ENCODE measurements at regions of chr10 and their contacts with region 1.

Region 1: DNA sequence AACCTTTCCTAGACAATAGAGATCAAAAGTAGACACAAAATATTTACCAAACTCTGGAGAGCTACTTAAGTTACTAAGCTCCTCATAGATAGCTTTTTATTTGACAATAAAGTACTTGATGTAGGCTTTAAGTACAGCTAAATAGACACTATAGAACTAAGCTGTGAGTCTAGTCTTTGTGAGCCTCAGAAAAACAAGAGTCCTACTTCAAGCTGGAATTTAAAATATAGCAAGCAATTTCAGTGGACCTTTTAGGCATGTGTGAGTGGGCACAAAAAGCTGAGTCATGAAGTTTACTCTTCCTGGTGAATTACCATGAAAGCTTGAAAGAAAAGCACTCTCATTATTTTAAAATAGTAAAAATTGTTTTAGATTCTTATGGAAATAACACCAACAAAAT is 76.1 kb downstream of the ADD3 start:
- DNase-seq: no peak
- ATAC-seq: no peak
- H3K4me3 ChIP-seq: no peak overlapping the region
- H3K4me3 Mint-ChIP-seq: peak overlapping the region; percentile 8
- H3K27ac ChIP-seq: peak overlapping the region in 1 of 2 experiments; percentile 13
- H3K27ac Mint-ChIP-seq: peak overlapping the region; percentile 69
- H3K4me1 ChIP-seq: peaks cover 85% of the 10 kb centered on the region
- H3K4me1 Mint-ChIP-seq: peaks cover 85% of the 10 kb centered on the region
- H3K27me3 ChIP-seq: no peaks in the 10 kb centered on the region
- H3K27me3 Mint-ChIP-seq: no peaks in the 10 kb centered on the region
- CTCF ChIP-seq: no peak

Region 2: GRCh38 chr10:110101464-110102144 is 17.7 kb after region 1 on chr10:
- CTCF ChIA-PET with region 1: interaction called, 3 read pairs
- POLR2A ChIA-PET with region 1: interaction called, 5 read pairs
- intact Hi-C with region 1: loop called in 1 of 2 experiments (anchors 2 kb)
- DNase-seq: no peak
- ATAC-seq: no peak
- H3K4me3 ChIP-seq: no peak overlapping the region
- H3K4me3 Mint-ChIP-seq: no peak overlapping the region
- H3K27ac ChIP-seq: no peak overlapping the region
- H3K27ac Mint-ChIP-seq: peak overlapping the region; percentile 14
- H3K4me1 ChIP-seq: peaks cover 24% of the 10 kb centered on the region
- H3K4me1 Mint-ChIP-seq: peaks cover 55% of the 10 kb centered on the region
- H3K27me3 ChIP-seq: no peaks in the 10 kb centered on the region
- H3K27me3 Mint-ChIP-seq: no peaks in the 10 kb centered on the region
- CTCF ChIP-seq: no peak

Measured in CD8-positive, alpha-beta T cell (primary cell).